ENCODE measurements at regions of chr1 and their contacts with region 1.

Region 1: DNA sequence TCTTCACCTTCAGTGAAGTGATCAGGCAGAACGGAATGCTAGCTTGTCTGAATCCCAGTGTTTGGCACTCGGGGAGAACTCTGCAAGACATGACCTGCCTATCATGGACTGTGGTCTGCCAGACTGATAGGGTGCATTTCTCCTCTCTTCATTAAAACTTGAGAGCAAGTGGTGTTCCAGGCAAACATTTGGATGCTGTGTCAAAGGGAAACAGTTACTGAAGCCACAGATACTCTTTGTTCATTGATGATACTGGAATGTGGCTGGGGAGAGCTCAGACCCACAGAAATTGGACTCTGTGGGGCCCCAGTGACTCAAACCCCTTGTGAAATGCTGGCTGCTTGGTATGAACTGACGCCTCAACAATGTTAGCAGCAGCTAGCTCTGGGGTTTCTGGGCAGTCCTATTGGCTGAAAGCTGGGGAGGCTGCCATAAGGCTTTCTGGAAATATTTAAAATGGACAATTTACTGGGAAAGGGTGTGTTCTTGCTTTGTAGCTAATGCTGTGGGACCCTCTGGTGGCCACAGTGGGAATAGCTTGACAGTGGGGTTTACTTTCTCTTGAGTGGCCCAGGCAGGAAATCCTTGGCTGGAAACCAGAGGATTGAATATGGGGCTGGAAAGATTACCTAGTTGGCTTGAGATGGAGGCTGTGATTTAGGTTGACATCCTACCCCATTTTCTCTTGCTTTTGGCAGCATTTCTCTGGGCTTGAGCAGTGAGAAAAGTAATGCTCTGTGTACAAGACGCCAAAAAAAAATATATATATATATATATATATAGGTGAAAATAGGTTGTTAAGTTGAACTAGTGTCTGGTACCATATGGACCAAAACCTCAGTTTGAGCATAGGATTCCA is 8.0 kb upstream of the S100A10 start:
- DNase-seq: peak; percentile 85
- ATAC-seq: peak; percentile 83
- H3K4me3 Mint-ChIP-seq: no peak overlapping the region
- H3K27ac Mint-ChIP-seq: no peak overlapping the region
- H3K4me1 Mint-ChIP-seq: peaks cover 7% of the 10 kb centered on the region
- H3K27me3 Mint-ChIP-seq: peaks cover 2% of the 10 kb centered on the region

Region 2: DNA sequence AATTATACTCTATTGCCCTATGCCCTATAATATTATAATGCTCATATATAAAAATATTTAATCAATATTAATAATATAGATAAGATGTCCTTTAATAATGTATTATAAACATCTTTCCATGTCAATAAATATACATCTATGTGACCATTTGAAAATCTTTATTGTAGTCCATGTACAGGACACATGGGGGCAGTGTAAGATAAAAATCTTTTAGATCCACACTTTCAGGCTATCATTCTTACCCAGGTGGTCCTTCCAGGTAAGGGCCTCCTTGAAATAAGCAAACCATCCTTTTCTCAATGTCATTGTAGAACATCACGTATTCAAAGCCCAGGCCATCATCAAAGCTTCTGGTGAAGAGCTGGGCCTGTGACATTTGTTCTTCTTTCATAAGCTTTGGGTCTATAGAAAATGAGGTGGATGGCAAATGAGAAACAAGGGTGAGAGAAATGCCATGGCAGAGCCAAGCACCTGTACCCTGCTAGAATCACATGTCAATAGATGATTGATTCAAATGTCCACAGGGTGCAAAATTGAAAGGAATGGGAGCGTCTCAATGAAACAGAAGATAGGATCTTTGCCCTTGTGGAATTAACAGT is 112.5 kb before region 1 on chr1:
- CTCF ChIA-PET with region 1: interaction called, 23 read pairs
- POLR2A ChIA-PET with region 1: no interaction called
- intact Hi-C with region 1: loop called (anchors 1 to 5 kb)
- DNase-seq: no peak
- ATAC-seq: peak; percentile 57
- H3K4me3 Mint-ChIP-seq: no peak overlapping the region
- H3K27ac Mint-ChIP-seq: no peak overlapping the region
- H3K4me1 Mint-ChIP-seq: peaks cover 25% of the 10 kb centered on the region
- H3K27me3 Mint-ChIP-seq: no peaks in the 10 kb centered on the region

Region 3: DNA sequence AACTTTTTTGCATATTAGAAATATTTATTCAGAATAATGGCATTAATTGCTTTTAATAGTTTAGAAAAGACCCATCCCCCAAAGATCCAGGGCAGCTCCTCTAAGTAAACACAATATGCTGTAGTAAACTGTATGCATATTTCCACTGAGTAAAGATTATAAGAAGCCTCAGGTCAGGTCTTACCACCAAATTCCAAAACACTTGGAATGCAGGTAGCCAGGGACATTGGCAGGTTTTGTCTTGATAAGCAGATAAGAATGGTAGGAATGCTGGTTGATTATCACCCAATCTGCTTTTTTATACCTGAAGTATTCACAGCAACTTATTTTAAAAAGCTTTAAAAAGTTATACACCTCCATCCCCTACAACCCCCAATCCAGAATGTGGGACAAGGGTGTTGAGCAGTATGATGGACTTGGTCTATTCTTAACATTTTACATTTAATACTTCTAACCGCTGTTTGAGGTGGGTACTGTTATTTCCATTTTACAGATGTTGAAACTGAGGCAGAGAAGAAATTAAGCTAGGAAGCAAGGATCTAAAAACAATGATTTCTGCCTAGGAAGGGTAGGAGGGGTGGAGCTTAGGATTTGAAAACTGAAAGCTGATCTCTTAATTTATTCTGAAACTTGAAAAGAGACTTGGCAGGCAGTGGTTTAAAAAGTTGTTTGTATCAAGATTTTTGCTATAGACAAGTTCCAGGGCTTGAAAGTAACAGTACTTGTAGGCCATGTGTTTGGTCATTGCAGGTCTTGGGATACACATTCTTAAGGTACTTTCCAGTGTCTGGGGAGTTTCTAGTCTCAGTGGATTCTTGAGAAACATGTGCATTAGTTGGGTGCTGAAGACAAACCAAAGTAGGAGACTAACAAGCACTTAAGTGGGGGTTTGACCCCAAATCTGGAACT is 76.7 kb before region 1 on chr1:
- CTCF ChIA-PET with region 1: interaction called, 266 read pairs
- POLR2A ChIA-PET with region 1: no interaction called
- intact Hi-C with region 1: no loop called
- DNase-seq: no peak
- ATAC-seq: peak; percentile 80
- H3K4me3 Mint-ChIP-seq: no peak overlapping the region
- H3K27ac Mint-ChIP-seq: peak overlapping the region; percentile 67
- H3K4me1 Mint-ChIP-seq: peaks cover 19% of the 10 kb centered on the region
- H3K27me3 Mint-ChIP-seq: no peaks in the 10 kb centered on the region

Region 4: GRCh38 chr1:151939779-151940178 is 61.8 kb before region 1 on chr1:
- CTCF ChIA-PET with region 1: interaction called, 266 read pairs
- POLR2A ChIA-PET with region 1: interaction called, 13 read pairs
- intact Hi-C with region 1: loop called (anchors 1 kb)
- DNase-seq: no peak
- ATAC-seq: no peak
- H3K4me3 Mint-ChIP-seq: no peak overlapping the region
- H3K27ac Mint-ChIP-seq: no peak overlapping the region
- H3K4me1 Mint-ChIP-seq: peaks cover 27% of the 10 kb centered on the region
- H3K27me3 Mint-ChIP-seq: no peaks in the 10 kb centered on the region

Region 5: DNA sequence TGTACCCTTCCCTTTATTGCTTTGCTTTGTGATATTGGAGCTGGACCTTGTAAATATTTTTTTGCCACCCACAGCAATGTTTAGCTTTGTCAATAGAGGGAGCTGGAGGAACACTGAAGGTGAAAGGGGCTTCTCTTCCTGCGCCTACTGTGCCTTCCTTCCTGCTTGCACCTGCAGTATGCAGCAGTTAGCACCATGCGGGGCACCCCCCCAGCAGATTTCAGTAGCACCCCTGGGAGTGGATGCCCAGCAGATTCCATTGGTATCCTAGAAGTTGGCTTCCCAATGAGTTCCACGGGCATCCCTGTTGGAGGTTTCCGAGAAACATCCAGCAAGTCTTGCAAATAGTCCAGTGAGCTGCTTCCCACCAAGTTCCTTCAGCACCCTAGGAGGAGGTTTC is 33.6 kb before region 1 on chr1:
- CTCF ChIA-PET with region 1: interaction called, 172 read pairs
- POLR2A ChIA-PET with region 1: interaction called, 3 read pairs
- intact Hi-C with region 1: loop called (anchors 1 kb)
- DNase-seq: peak; percentile 63
- ATAC-seq: peak; percentile 78
- H3K4me3 Mint-ChIP-seq: no peak overlapping the region
- H3K27ac Mint-ChIP-seq: no peak overlapping the region
- H3K4me1 Mint-ChIP-seq: peaks cover 18% of the 10 kb centered on the region
- H3K27me3 Mint-ChIP-seq: no peaks in the 10 kb centered on the region

Region 6: DNA sequence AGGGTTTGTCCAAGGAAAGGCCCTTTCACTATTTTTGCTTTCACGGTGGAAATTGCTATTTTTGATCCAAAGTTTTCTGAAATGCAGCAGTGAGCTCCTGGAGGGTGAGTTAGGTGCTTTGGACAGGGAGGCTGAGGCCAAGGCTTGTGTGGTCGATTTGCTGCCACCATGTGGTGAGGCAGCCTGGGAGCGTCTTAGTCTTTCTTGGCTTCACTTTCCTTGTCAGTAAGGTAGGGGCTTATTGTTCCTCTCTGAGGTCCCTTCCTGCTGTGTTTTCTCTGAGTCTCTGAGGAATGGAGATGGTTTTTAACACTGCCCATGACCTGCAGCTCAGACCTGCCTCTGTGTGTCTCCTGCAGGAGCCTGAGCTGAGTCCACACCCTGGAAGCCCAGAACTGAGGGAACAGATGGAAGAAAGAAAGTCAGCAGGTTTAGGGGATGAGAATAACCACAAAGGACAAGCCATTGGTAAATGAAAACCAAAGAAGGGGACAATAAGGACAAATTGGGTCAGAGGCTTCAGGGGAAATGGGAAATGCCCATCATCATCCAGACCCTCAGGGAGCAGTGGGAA is 12.1 kb after region 1 on chr1:
- CTCF ChIA-PET with region 1: interaction called, 44 read pairs
- POLR2A ChIA-PET with region 1: no interaction called
- intact Hi-C with region 1: no loop called
- DNase-seq: peak; percentile 72
- ATAC-seq: peak; percentile 49
- H3K4me3 Mint-ChIP-seq: no peak overlapping the region
- H3K27ac Mint-ChIP-seq: no peak overlapping the region
- H3K4me1 Mint-ChIP-seq: peaks cover 3% of the 10 kb centered on the region
- H3K27me3 Mint-ChIP-seq: peaks cover 9% of the 10 kb centered on the region

Region 7: GRCh38 chr1:152127670-152128069 is 126.0 kb after region 1 on chr1:
- CTCF ChIA-PET with region 1: no interaction called
- POLR2A ChIA-PET with region 1: no interaction called
- intact Hi-C with region 1: no loop called
- DNase-seq: no peak
- ATAC-seq: peak; percentile 36
- H3K4me3 Mint-ChIP-seq: no peak overlapping the region
- H3K27ac Mint-ChIP-seq: no peak overlapping the region
- H3K4me1 Mint-ChIP-seq: no peaks in the 10 kb centered on the region
- H3K27me3 Mint-ChIP-seq: peaks cover 53% of the 10 kb centered on the region

Measured in activated CD4-positive, alpha-beta T cell treated with anti-CD3 and anti-CD28 coated beads for 36 hours (primary cell).